Activated T-helper 1 cell treated with anti-CD3 and anti-CD28 coated beads, Interleukin-12 subunit alpha, Interleukin-12 subunit beta, Interleukin-2, Interleukin-4 antibody, amounts not matched to agents 30 ng/mL and 10 ng/mL and 1 ng/mL, durations not matched to agents 14 hours and 24 hours and 36 hours (primary cell): ENCODE measurements at regions of chr13 and their contacts with region 1.

Region 1: DNA sequence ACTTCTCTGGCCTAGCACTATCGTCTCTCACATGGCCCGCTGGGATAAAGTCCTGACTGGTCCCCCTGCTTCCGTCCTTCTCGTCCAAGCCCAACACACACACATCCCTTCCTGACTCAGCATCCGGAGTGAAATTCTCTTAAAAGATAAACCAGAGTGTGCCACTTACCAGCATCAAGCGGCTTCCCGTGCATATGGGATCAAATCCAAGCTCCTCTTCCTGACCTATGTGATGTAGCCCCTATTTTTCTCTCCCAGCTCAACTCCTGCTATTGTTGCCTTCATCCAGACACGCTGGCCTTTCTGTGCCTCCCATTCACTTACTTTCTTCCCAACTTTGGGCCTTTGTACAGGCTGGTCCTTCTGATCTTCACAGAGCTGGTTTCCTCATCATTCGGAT is 530.4 kb downstream of the DIAPH3 start:
- DNase-seq: no peak
- H3K4me3 Mint-ChIP-seq: no peak overlapping the region
- H3K27ac Mint-ChIP-seq: no peak overlapping the region
- H3K4me1 Mint-ChIP-seq: no peaks in the 10 kb centered on the region
- H3K27me3 Mint-ChIP-seq: no peaks in the 10 kb centered on the region

Region 2: DNA sequence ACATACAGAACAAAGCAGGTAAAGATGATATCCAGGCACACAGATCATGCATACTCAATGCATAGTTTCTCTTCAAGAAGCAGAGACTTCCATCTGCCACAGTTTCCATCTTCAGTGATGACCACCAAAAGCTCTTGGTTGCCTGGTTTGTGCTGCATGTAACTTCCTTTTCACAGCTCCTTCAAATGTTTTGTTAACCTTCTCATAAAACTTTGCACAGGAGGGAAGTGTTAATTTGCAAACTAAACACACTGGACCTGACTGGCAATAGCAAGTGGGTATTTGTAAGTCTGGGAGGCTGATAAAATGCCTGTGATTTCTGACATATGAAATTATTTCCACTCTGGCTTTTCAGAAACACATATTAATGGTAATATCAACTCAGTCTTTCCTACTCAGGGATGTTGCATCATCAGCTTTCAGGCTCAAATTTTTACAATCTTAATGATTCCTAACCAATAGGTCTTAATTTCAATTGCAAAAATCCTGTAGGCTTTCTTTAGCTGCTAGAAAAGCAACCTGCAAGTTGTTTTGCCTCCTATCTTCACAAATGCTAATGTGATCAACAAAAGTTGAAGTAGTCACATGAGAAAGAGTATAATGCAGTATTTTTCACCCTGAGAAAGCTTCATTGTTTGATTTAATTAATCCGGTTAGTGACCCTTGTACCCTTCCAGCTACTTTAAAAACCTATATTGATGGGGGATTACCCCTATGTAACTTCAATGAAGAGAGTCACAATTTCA is 45.1 kb before region 1 on chr13:
- intact Hi-C with region 1: loop called (anchors 1 kb)
- DNase-seq: no peak
- H3K4me3 Mint-ChIP-seq: no peak overlapping the region
- H3K27ac Mint-ChIP-seq: no peak overlapping the region
- H3K4me1 Mint-ChIP-seq: no peaks in the 10 kb centered on the region
- H3K27me3 Mint-ChIP-seq: no peaks in the 10 kb centered on the region

Region 3: GRCh38 chr13:59666504-59666903 is 33.2 kb after region 1 on chr13:
- intact Hi-C with region 1: no loop called
- DNase-seq: no peak
- H3K4me3 Mint-ChIP-seq: no peak overlapping the region
- H3K27ac Mint-ChIP-seq: no peak overlapping the region
- H3K4me1 Mint-ChIP-seq: no peaks in the 10 kb centered on the region
- H3K27me3 Mint-ChIP-seq: no peaks in the 10 kb centered on the region